ENCODE measurements at regions of chr17 and their contacts with region 1.

Region 1: GRCh38 chr17:8138672-8139371 is 13.4 kb downstream of the PER1 start:
- DNase-seq: peak; percentile 94 to 100
- H3K4me3 ChIP-seq: peak overlapping the region; percentile 86 to 98 (median 92)
- H3K27ac ChIP-seq: peak overlapping the region; percentile 81
- H3K4me1 ChIP-seq: peaks cover 0 to 7% (median 4%) of the 10 kb centered on the region in 4 experiments; a peak in 4 of 7 replicates
- H3K27me3 ChIP-seq: peaks cover 0 to 7% (median 2%) of the 10 kb centered on the region in 4 experiments; a peak in 4 of 7 replicates
- CTCF ChIP-seq: peak; percentile 63 to 96 (median 78)
- EP300 ChIP-seq: peak in 1 of 2 experiments; percentile 89; a peak in 1 of 3 replicates
- POLR2A ChIP-seq: peak in 1 of 2 experiments; percentile 59; a peak in 1 of 3 replicates
- RAD21 ChIP-seq: peak; percentile 58 to 62

Region 2: DNA sequence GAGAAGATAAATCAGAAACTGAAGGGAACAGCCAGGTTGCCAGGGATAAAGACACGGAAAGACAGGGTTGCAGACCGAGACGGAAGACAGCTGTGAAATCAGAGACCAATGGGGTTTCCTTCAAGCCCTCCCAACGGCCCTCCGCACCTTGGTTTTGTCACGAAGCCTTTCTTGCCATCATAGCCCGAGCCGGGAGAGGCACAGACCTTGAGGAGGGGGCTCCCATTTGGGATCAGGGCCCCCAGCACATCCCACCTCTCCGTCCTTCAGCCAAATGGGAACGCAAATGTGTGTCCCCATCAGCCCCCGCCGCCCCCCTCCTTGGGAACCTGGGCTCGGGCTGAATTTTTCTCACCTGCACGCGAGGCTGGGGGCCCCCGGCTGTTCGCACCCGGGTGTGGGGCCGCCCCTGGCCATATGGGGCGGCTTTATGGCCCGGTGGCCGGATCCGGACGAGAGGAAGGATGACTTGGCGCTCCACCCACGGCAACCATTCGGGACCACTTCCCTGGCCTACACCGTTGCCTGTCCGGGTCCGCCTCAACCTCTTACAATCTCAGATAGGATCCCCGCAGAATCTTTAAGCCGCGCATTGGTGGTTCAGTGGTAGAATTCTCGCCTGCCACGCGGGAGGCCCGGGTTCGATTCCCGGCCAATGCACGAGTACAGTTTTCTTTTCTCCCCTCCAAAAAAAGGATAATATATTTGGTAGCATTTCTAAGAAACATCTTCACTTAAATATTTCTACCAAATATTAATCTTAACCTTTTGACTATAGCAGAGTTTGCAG is 13.5 kb before region 1 on chr17:
- CTCF ChIA-PET with region 1: interaction called, 26 read pairs
- POLR2A ChIA-PET with region 1: interaction called, 23 read pairs
- DNase-seq: peak in 1 of 2 experiments; percentile 99
- H3K4me3 ChIP-seq: peak overlapping the region; percentile 54 to 89 (median 82)
- H3K27ac ChIP-seq: no peak overlapping the region
- H3K4me1 ChIP-seq: peaks cover 0 to 24% (median 13%) of the 10 kb centered on the region in 4 experiments; a peak in 6 of 7 replicates
- H3K27me3 ChIP-seq: peaks cover 30 to 54% (median 51%) of the 10 kb centered on the region in 4 experiments
- CTCF ChIP-seq: no peak
- EP300 ChIP-seq: no peak
- POLR2A ChIP-seq: no peak
- RAD21 ChIP-seq: no peak

Region 3: DNA sequence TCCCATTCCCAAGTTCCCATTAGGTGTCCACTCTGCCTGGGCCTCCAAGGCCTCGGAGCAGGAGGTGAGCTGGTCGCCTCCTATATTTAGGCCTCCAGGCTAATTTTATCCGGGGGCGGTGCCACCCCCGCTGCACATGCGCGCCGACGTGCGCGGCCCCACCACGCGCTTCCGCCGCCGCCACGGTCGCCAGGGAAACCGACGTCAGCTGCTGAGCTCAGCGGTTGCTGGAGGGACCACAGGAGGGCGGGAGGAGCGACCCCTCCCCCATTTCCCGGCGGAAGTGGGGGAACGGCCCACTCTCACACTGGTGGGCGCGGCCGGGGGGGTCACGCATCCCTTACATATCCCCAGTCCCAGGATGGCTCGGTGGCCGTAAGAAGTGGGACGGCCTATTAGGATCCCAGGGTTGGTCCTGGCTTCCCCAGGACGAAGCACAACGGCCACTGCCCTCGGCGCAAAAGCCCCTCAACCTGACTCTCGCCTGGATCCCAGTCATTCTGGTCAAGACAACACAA is 12.4 kb after region 1 on chr17:
- CTCF ChIA-PET with region 1: interaction called, 133 read pairs
- POLR2A ChIA-PET with region 1: interaction called, 76 read pairs
- DNase-seq: peak in 1 of 2 experiments; percentile 81
- H3K4me3 ChIP-seq: peak overlapping the region; percentile 79 to 93 (median 84)
- H3K27ac ChIP-seq: no peak overlapping the region
- H3K4me1 ChIP-seq: peaks cover 12 to 31% (median 19%) of the 10 kb centered on the region in 4 experiments
- H3K27me3 ChIP-seq: no peaks in the 10 kb centered on the region
- CTCF ChIP-seq: no peak
- EP300 ChIP-seq: no peak
- POLR2A ChIP-seq: no peak
- RAD21 ChIP-seq: no peak

Region 4: GRCh38 chr17:8156246-8156992 is 17.6 kb after region 1 on chr17:
- CTCF ChIA-PET with region 1: interaction called, 133 read pairs
- POLR2A ChIA-PET with region 1: interaction called, 76 read pairs
- DNase-seq: peak; percentile 99 to 100
- H3K4me3 ChIP-seq: peak overlapping the region; percentile 76 to 93 (median 85)
- H3K27ac ChIP-seq: peak overlapping the region; percentile 89
- H3K4me1 ChIP-seq: peaks cover 12 to 35% (median 20%) of the 10 kb centered on the region in 4 experiments
- H3K27me3 ChIP-seq: no peaks in the 10 kb centered on the region
- CTCF ChIP-seq: peak in 1 of 3 experiments; percentile 9; a peak in 1 of 4 replicates
- EP300 ChIP-seq: peak in 1 of 2 experiments; percentile 63; a peak in 1 of 3 replicates
- POLR2A ChIP-seq: peak; percentile 54 to 69
- RAD21 ChIP-seq: peak in 1 of 2 experiments; percentile 23; a peak in 1 of 4 replicates

Region 5: GRCh38 chr17:8162233-8162996 is 23.6 kb after region 1 on chr17 and contains the start of gene VAMP2:
- CTCF ChIA-PET with region 1: interaction called, 133 read pairs
- POLR2A ChIA-PET with region 1: interaction called, 76 read pairs
- DNase-seq: no peak
- H3K4me3 ChIP-seq: peak within 1 kb of the TSS; percentile 88 to 98 (median 93)
- H3K27ac ChIP-seq: peak within 1 kb of the TSS; percentile 99
- H3K4me1 ChIP-seq: peaks cover 4 to 25% (median 21%) of the 10 kb centered on the region in 4 experiments
- H3K27me3 ChIP-seq: no peaks in the 10 kb centered on the region
- CTCF ChIP-seq: no peak
- EP300 ChIP-seq: 0 out of 3 replicates have a peak, but pooled peaks of 1 of the 2 experiments have one; percentile 40
- POLR2A ChIP-seq: peak; percentile 18 to 70; a peak in 2 of 3 replicates
- RAD21 ChIP-seq: no peak
- total RNA-seq, gene VAMP2: 19.0 and 20.5 TPM in 2 replicates

Region 6: DNA sequence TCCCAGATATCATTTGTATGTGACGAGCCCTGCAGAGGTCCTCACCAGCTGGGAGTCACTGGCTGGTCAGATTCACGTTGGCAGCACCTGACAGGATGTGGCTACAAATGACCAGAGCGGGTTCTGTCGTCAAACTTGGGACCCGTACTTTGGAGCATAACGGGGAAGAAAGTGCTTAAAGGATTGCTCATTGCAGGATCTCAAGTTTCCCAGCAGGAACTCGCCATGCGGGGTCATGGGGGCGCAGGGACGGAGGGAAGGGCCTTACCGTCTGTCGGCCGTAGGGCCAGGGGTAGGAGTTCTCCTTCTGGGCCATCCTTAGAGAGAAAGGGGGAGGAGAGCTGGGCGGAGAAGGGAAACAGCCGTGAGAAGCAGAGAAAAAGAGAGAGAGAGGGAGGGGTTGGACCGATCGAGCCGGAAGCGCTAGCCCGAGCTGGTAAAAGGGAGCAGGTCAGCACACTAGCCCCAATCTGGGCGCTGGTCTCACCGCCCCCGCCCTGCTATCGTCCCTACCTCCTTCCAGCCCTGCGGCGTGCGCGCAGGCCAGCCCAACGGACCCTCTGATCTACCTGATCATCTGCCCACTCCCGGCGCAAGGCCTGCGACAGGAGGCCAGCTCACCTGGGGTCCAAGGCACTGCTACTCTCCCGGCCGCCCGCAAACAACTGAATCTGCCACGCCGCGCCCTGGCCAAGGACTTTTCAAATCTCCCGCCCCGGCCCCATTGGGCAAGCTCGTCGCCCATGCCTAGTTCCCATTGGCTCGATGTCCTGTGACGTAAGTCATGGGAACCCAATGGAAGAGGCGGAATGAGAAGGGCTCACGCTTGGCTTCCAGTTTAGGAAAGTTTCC is 71.3 kb after region 1 on chr17 and contains the start of gene AURKB:
- CTCF ChIA-PET with region 1: interaction called, 3 read pairs
- POLR2A ChIA-PET with region 1: interaction called, 10 read pairs
- DNase-seq: peak in 1 of 2 experiments; percentile 97
- H3K4me3 ChIP-seq: peak within 1 kb of the TSS; percentile 67 to 93 (median 80)
- H3K27ac ChIP-seq: peak within 1 kb of the TSS; percentile 92; the same call in 1 of the 2 replicates
- H3K4me1 ChIP-seq: peaks cover 0 to 4% (median under 1%) of the 10 kb centered on the region in 4 experiments; a peak in 2 of 7 replicates
- H3K27me3 ChIP-seq: no peaks in the 10 kb centered on the region
- CTCF ChIP-seq: no peak; a peak in 1 of 4 replicates
- EP300 ChIP-seq: no peak
- POLR2A ChIP-seq: peak; percentile 90 to 98
- RAD21 ChIP-seq: no peak
- total RNA-seq, gene AURKB: 154 and 160 TPM in 2 replicates

Region 7: DNA sequence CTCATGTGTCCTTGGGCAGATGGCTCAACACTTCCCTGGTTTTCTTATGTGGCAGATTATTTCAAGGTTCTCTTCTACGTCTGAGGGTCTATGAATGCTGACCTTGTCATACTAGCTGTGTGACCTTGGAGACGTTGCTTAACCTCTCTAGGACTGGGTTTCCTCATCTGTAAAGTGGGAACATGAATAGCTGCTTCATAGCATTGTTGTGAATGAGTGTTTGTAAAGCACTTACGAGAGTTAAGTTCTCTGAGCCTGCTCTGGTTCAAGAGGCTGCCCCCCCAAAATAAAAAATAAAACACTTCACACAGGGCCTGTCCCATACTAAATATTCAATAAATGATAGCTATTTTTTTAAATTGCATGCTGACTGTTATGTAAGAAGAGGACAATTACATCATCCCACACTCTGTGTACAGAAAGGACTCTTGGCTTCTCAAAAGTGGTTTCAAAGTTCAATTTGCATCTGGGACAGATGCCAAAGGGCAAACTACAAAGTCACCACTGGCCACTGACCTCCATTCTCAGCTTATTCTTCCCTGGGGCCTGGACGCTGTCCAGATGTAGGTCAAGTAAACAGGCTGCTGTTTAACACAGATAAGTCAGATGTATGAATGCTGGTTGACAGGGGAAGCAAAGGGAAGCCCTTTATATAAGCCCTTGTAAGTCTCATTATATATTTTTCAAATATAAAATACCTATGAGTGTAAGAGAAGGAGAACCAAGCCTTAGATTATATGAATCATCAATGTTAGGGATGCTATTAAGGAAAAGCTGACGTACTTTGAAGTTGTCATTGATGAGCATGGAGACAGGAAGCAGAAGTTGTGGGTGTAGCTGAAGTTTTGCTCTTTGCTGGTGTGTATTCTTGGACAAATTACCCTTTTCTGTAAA is 281.5 kb after region 1 on chr17:
- CTCF ChIA-PET with region 1: no interaction called
- POLR2A ChIA-PET with region 1: no interaction called
- DNase-seq: no peak
- H3K4me3 ChIP-seq: no peak overlapping the region
- H3K27ac ChIP-seq: no peak overlapping the region
- H3K4me1 ChIP-seq: no peaks in the 10 kb centered on the region
- H3K27me3 ChIP-seq: no peaks in the 10 kb centered on the region
- CTCF ChIP-seq: no peak
- EP300 ChIP-seq: no peak
- POLR2A ChIP-seq: no peak
- RAD21 ChIP-seq: no peak

Measured in H1 (cell line).